Heart left ventricle (tissue), 16 donors: ENCODE measurements at regions of chr10 and their contacts with region 1.

Region 1: DNA sequence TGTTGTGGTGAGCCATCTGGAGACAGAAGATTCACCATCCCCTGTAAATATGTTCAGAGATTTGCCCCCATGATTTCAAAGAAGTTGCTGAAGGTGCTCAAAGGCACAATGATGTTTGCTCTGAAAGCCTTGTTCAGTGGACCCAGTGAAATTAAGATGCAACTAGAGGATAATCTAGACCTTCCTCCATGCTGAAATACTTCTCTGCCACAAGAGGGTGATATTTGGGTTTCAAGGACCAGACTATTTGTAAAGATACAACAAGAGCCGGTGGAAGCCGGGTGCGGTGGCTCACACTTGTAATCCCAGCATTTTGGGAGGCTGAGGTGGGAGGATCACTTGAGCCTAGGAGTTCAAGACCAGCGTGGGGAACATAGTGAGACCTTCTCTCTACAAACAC is 13.5 kb upstream of the MSRB2 start:
- DNase-seq: no peak
- ATAC-seq: no peak
- H3K4me3 ChIP-seq: no peak overlapping the region
- H3K27ac ChIP-seq: peak overlapping the region in 1 of 12 donors; percentile 45
- H3K4me1 ChIP-seq: peaks cover 0 to 2% (median 0%) of the 10 kb centered on the region in 12 donors
- H3K27me3 ChIP-seq: peaks cover 0 to 12% (median 0%) of the 10 kb centered on the region in 9 donors
- CTCF ChIP-seq: peak in 6 of 12 donors; percentile 14 to 28 (median 21)
- POLR2A ChIP-seq: no peak

Region 2: GRCh38 chr10:22723343-22723779 is 358.5 kb before region 1 on chr10:
- intact Hi-C with region 1: no loop called
- DNase-seq: no peak
- ATAC-seq: peak in 3 of 4 donors; percentile 28 to 53 (median 52)
- H3K4me3 ChIP-seq: no peak overlapping the region
- H3K27ac ChIP-seq: no peak overlapping the region
- H3K4me1 ChIP-seq: peaks cover 0 to 15% (median 0%) of the 10 kb centered on the region in 12 donors
- H3K27me3 ChIP-seq: no peaks in the 10 kb centered on the region
- CTCF ChIP-seq: no peak
- POLR2A ChIP-seq: no peak

Region 3: DNA sequence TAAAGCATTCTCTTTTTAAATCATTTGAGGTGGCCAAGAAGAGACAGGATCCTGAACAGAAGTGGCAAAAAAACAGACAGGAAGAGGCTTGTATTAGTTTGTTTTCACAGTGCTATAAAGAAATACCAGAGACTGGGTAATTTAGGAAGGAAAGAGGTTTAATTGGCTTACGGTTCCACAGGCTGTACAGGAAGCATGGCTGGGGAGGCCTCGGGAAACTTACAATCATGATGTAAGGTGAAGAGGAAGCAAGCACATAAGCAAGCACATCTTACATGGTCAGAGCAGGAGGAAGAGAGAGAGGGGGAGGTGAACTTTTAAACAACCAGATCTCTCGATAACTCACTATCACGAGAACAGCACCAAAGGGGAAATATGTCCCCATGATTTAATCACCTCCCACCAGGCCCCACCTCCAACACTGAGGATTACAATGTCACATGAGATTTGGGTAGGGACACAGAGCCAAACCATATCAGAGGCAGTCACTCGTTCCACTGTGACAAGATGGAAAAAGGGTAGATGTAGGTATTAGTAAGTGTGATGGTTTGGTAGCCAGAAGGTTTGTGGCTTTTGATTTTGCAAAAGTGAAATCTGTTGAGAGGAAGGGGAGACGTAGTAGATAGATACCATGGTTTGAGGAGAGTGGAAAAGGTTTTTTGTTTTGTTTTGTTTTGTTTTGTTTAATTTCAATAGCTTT is 18.6 kb after region 1 on chr10:
- intact Hi-C with region 1: loop called in 1 of 10 experiments (anchors 1 kb)
- DNase-seq: no peak
- ATAC-seq: no peak
- H3K4me3 ChIP-seq: no peak overlapping the region
- H3K27ac ChIP-seq: peak overlapping the region in 2 of 12 donors; percentile 11 to 47
- H3K4me1 ChIP-seq: peaks cover 0 to 39% (median 26%) of the 10 kb centered on the region in 12 donors
- H3K27me3 ChIP-seq: no peaks in the 10 kb centered on the region
- CTCF ChIP-seq: no peak
- POLR2A ChIP-seq: no peak